ENCODE measurements at regions of chr3 and their contacts with region 1.

Region 1: DNA sequence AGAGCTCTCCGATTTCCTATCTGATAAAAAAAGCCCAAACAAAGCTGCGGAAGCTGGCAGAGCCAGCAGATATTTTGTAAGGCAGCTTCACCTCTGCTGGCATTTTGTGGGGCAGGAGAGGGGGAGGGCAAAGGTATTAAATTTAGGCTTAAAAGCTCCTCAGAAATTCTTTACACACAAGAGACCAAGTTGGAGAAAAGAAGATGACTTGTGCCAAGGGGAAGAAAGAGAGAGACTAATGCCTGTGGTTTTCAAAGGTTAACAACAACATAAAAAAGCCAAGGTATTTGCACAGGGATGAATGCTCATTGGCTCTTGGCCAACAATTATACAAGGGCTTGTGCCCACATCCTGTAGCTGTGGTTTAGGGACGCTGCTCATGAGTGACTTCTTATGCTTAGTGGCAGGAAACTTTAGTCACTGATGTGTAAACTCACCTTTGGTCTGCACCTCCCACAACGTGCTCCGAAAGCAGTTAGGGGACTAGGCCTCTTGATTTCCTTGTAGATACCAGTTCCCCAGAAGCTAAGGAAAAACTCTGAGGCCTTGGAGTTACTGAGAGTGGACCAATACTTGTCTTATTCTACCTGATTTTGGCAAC is 152.9 kb downstream of the TPRG1 start:
- DNase-seq: peak; percentile 96
- H3K4me3 Mint-ChIP-seq: peak overlapping the region; percentile 84
- H3K27ac Mint-ChIP-seq: peak overlapping the region; percentile 99
- H3K4me1 Mint-ChIP-seq: peaks cover 58% of the 10 kb centered on the region
- H3K27me3 Mint-ChIP-seq: peaks cover 3% of the 10 kb centered on the region

Region 2: GRCh38 chr3:189236352-189236751 is 88.3 kb before region 1 on chr3:
- intact Hi-C with region 1: loop called (anchors 1 kb)
- DNase-seq: no peak
- H3K4me3 Mint-ChIP-seq: no peak overlapping the region
- H3K27ac Mint-ChIP-seq: peak overlapping the region; percentile 5
- H3K4me1 Mint-ChIP-seq: peaks cover 10% of the 10 kb centered on the region
- H3K27me3 Mint-ChIP-seq: no peaks in the 10 kb centered on the region

Region 3: DNA sequence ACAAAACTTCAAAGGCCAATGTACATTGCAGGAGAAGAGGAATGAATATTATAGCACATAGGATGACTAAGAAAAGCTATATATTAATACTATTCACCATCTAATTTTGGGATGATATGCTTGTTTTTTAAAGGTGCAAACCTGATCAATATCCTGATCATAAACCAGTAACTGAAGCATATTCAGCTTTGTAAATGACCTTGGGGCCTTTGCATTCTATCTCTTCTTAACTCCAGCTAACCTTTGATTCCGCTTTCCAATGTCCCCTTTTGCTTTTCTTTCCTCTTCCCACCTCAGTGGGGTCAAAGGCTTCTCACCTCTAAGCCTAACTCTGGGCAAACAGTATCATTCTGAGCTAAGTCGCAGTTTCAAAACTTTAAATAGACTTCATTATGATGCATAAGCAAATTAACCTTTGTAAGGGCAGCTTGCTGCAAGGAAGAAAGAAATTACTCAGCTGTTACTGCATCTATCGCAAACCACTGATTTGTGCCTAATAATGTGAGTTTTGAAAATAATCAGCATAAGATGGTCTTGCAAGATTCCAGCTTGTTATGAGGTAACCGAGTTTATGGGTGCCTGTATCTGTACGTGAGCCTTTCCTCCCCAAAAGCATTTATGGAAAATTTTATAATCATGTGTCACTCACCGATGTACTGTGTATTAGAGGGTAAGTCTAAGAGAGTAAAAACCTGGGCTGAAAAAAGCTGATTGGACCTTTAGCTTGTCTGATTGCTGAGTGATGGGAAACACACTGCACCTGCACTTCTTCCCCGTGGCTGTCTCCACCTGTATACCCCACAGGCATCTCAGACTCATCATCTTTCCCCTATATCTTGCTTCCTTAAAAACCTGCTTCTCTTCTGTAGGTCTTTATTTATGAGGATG is 36.0 kb before region 1 on chr3:
- intact Hi-C with region 1: loop called (anchors 1 kb)
- DNase-seq: no peak
- H3K4me3 Mint-ChIP-seq: peak overlapping the region; percentile 6
- H3K27ac Mint-ChIP-seq: peak overlapping the region; percentile 70
- H3K4me1 Mint-ChIP-seq: peaks cover 26% of the 10 kb centered on the region
- H3K27me3 Mint-ChIP-seq: no peaks in the 10 kb centered on the region

Region 4: GRCh38 chr3:189355481-189356201 is 31.0 kb after region 1 on chr3:
- intact Hi-C with region 1: loop called (anchors 1 kb)
- DNase-seq: peak; percentile 81
- H3K4me3 Mint-ChIP-seq: peak overlapping the region; percentile 65
- H3K27ac Mint-ChIP-seq: peak overlapping the region; percentile 85
- H3K4me1 Mint-ChIP-seq: peaks cover 26% of the 10 kb centered on the region
- H3K27me3 Mint-ChIP-seq: no peaks in the 10 kb centered on the region

Region 5: DNA sequence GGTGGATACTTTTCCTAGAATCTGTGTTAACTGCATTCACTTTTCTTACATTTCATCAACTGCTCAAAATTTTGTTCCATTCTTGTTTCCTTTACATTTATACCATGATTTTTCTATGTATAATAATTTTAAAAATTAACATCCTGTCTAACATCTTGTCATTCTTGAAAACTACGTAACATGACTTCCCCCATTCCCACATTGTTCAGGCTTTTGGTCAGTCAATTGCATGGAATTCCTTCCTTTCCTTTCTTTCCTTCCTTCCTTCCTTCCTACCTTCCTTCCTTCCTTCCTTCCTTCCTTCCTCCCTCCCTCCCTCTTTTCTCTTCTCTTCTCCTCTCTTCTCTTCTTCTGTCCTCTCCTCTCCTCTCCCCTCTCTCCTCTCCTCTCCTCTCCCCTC is 85.9 kb after region 1 on chr3:
- intact Hi-C with region 1: no loop called
- DNase-seq: no peak
- H3K4me3 Mint-ChIP-seq: no peak overlapping the region
- H3K27ac Mint-ChIP-seq: no peak overlapping the region
- H3K4me1 Mint-ChIP-seq: no peaks in the 10 kb centered on the region
- H3K27me3 Mint-ChIP-seq: peaks cover 5% of the 10 kb centered on the region

Region 6: DNA sequence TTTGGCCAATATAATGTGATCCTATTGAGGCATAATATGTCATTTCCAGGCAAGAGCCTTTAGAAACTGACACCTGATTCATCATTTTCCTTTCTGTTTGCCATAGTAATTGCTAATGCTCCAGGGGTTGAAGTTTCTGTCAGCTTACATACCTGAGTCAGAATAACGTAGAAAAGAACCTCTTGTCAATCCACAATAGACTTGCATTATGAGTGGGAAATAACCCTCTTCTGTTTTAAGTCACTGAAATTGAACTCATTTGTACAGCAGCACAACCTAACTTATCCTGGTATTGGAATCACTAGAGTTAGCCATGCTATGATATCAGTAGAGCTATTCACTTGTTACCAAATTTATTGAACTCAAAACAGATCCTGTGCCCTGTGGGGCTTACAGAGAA is 204.8 kb after region 1 on chr3:
- intact Hi-C with region 1: loop called (anchors 2 kb)
- DNase-seq: no peak
- H3K4me3 Mint-ChIP-seq: no peak overlapping the region
- H3K27ac Mint-ChIP-seq: peak overlapping the region; percentile 69
- H3K4me1 Mint-ChIP-seq: peaks cover 18% of the 10 kb centered on the region
- H3K27me3 Mint-ChIP-seq: no peaks in the 10 kb centered on the region

Region 7: GRCh38 chr3:189841473-189842210 is 517.0 kb after region 1 on chr3:
- intact Hi-C with region 1: loop called (anchors 10 kb)
- DNase-seq: no peak
- H3K4me3 Mint-ChIP-seq: no peak overlapping the region
- H3K27ac Mint-ChIP-seq: no peak overlapping the region
- H3K4me1 Mint-ChIP-seq: peaks cover 7% of the 10 kb centered on the region
- H3K27me3 Mint-ChIP-seq: no peaks in the 10 kb centered on the region